ENCODE measurements at regions of chr6 and their contacts with region 1.

Region 1: GRCh38 chr6:35202066-35202546 is 11.7 kb upstream of the SCUBE3 start:
- DNase-seq: no peak
- ATAC-seq: no peak
- H3K4me3 Mint-ChIP-seq: no peak overlapping the region
- H3K27ac Mint-ChIP-seq: no peak overlapping the region
- H3K4me1 Mint-ChIP-seq: no peaks in the 10 kb centered on the region
- H3K27me3 Mint-ChIP-seq: peaks cover 35% of the 10 kb centered on the region
- CTCF ChIP-seq: no peak

Region 2: GRCh38 chr6:35146453-35146852 is 55.7 kb before region 1 on chr6:
- CTCF ChIA-PET with region 1: interaction called, 104 read pairs
- POLR2A ChIA-PET with region 1: interaction called, 5 read pairs
- intact Hi-C with region 1: loop called (anchors 5 kb)
- DNase-seq: peak; percentile 64
- ATAC-seq: peak; percentile 45
- H3K4me3 Mint-ChIP-seq: no peak overlapping the region
- H3K27ac Mint-ChIP-seq: no peak overlapping the region
- H3K4me1 Mint-ChIP-seq: peaks cover 21% of the 10 kb centered on the region
- H3K27me3 Mint-ChIP-seq: peaks cover 5% of the 10 kb centered on the region
- CTCF ChIP-seq: peak; percentile 59

Region 3: DNA sequence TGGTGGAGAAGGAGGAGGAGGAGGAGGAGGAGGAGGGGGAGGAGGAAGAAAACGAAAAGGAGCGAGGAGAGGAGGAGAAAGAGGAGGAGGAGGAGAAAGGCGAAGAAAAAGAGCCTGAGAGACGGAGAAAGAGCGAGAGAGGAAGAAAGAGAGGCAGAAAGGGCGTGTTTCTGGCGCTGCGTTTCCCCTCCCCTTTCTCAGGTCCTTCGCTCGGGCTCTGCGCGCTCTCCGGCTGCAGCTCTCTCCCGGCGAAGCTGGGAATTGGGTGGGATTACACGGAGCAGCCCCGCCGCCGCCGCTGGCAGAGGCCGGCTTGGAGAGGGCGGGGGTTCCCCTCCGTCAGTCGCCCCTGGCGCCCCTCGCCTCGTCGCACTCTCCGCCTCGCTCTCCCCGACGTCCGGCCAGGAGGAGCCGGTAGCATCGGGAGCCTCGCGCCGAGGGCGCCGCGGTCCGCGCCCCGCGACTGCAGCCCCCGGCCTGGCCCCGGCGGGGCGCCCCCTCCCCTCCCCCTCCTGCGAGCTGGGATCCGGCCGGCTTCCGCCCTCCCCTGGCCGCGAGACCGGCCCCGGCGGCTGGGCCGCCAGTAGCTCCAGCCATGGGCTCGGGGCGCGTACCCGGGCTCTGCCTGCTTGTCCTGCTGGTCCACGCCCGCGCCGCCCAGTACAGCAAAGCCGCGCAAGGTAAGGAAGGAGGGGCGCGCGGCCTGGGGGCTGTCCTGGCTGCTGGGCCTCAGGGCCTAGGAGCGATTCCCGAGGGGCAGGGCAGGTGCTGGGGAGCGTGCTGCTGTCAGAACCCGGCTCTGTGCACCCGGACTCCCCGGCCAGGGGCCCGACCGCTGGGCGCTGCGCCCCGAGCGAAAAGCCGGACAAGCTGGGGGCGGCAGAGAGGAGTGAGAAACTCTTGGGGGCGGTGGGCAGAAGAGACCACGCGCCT is 12.0 kb after region 1 on chr6 and contains the start of gene SCUBE3:
- CTCF ChIA-PET with region 1: interaction called, 13 read pairs
- POLR2A ChIA-PET with region 1: no interaction called
- intact Hi-C with region 1: no loop called
- DNase-seq: peak; percentile 24
- ATAC-seq: peak; percentile 37
- H3K4me3 Mint-ChIP-seq: peak within 1 kb of the TSS; percentile 39
- H3K27ac Mint-ChIP-seq: no peak within 1 kb of the TSS
- H3K4me1 Mint-ChIP-seq: peaks cover 6% of the 10 kb centered on the region
- H3K27me3 Mint-ChIP-seq: peaks cover 59% of the 10 kb centered on the region
- CTCF ChIP-seq: no peak
- total RNA-seq, gene SCUBE3: not detected

Region 4: GRCh38 chr6:35230950-35231349 is 28.8 kb after region 1 on chr6:
- CTCF ChIA-PET with region 1: interaction called, 16 read pairs
- POLR2A ChIA-PET with region 1: no interaction called
- intact Hi-C with region 1: no loop called
- DNase-seq: no peak
- ATAC-seq: no peak
- H3K4me3 Mint-ChIP-seq: no peak overlapping the region
- H3K27ac Mint-ChIP-seq: no peak overlapping the region
- H3K4me1 Mint-ChIP-seq: no peaks in the 10 kb centered on the region
- H3K27me3 Mint-ChIP-seq: no peaks in the 10 kb centered on the region
- CTCF ChIP-seq: no peak